ENCODE measurements at regions of chr20 and their contacts with region 1.

Region 1: DNA sequence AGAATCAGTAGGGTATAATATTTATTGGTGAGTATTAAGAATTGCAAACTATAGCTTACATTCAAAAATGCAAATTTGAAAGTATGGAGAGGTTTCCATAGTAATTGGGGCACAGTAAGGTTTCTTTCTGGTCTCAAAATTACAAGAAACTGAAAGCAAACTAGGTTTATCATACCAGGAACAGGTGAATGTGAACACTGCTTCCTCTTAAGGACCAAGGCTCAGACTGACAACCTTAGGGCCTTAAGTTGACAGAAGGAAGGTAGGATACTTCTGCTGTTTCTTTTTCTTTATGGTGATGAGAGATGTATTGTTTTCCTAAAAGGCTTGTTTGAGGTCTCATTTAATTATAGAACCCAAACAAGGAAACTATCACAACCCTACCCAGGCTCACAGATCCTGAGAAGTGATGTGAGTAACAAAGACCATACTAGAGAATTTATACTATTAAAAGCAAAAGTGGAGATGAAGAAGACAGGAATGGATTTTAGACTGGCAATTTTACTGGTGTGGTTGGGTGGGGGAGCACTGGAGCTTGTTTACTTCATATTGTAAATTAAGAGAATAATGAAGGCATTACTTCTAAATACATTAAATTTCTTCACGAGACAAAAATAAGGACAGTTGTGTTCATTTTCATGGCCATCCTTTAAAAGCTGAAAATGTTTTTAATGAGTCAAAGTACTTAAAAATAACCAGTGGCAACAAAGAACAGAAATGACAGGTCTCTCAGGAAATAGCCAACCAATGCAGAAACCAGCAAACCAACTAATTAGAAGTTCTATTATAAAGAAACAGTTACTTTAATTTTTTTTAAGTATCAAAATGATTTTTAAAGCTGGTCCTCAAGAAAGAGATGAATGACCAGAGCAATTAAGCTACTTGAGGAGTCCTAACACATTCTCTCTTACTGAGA is 21.3 kb downstream of the STAU1 start:
- DNase-seq: no peak
- ATAC-seq: peak; percentile 60
- H3K4me3 Mint-ChIP-seq: no peak overlapping the region
- H3K27ac Mint-ChIP-seq: peak overlapping the region; percentile 66
- H3K4me1 Mint-ChIP-seq: peaks cover 42% of the 10 kb centered on the region
- H3K27me3 Mint-ChIP-seq: no peaks in the 10 kb centered on the region
- CTCF ChIP-seq: no peak

Region 2: GRCh38 chr20:49179368-49180277 is 12.8 kb after region 1 on chr20:
- CTCF ChIA-PET with region 1: no interaction called
- POLR2A ChIA-PET with region 1: interaction called, 10 read pairs
- intact Hi-C with region 1: no loop called
- DNase-seq: no peak
- ATAC-seq: peak; percentile 66
- H3K4me3 Mint-ChIP-seq: peak overlapping the region; percentile 42
- H3K27ac Mint-ChIP-seq: peak overlapping the region; percentile 20
- H3K4me1 Mint-ChIP-seq: peaks cover 53% of the 10 kb centered on the region
- H3K27me3 Mint-ChIP-seq: no peaks in the 10 kb centered on the region
- CTCF ChIP-seq: no peak

Region 3: DNA sequence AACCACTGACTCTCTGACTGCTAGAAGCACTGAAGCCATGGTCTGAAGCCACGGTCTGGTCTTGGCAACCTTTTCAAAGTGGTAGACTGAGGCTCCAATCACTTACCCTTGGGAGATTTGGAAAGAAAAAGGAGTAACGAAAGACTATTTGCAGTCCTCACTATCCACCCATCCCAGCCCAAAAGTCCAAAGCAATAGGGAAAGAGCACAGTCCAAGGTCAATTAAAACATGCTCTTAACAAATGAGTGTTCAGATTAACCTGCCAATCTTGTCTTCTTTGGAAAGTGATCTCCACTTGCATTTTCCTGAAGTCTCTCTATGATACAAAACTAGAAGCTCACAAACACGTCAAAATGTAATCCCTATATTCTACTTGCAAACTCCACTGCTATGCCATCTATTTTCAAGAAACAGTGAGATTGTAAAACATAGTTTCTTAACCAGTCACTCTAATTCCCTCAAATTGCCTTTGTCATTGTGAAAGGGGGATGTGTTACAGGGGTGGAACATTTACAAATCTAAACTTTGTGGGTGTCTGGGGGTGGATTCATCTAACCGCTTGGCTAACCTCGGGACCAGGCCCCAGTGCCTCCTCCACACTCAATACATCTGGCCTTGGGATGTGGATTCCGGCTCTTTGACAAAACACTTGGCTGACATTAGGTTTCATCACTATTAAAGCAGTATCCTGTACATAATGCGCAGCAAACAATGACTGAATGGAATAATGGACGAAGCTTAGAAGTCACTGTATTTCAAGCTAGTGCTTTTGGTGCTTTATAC is 490.5 kb after region 1 on chr20:
- CTCF ChIA-PET with region 1: no interaction called
- POLR2A ChIA-PET with region 1: no interaction called
- intact Hi-C with region 1: no loop called
- DNase-seq: no peak
- ATAC-seq: no peak
- H3K4me3 Mint-ChIP-seq: no peak overlapping the region
- H3K27ac Mint-ChIP-seq: no peak overlapping the region
- H3K4me1 Mint-ChIP-seq: peaks cover 28% of the 10 kb centered on the region
- H3K27me3 Mint-ChIP-seq: no peaks in the 10 kb centered on the region
- CTCF ChIP-seq: no peak

Region 4: DNA sequence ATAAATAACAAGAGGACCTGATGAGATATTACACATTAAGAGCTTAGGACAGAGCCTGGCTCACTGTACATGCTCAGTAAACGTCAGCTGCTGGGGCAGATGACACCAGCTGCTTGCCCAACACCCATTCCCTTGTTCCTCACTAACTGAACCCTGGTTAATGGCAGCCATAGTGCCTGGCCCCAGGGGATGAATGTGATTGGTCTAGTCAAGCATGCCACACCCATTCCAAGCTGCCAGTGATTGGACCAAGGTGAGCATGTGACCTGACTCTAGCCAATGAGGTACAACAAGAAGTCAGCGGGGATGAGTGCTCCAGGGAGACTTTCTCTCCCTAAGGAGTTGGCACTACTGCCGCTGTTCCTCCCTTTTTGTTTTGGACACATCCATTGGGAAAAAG is 1258.3 kb after region 1 on chr20:
- CTCF ChIA-PET with region 1: no interaction called
- POLR2A ChIA-PET with region 1: no interaction called
- intact Hi-C with region 1: no loop called
- DNase-seq: no peak
- ATAC-seq: no peak
- H3K4me3 Mint-ChIP-seq: no peak overlapping the region
- H3K27ac Mint-ChIP-seq: no peak overlapping the region
- H3K4me1 Mint-ChIP-seq: no peaks in the 10 kb centered on the region
- H3K27me3 Mint-ChIP-seq: peaks cover 11% of the 10 kb centered on the region
- CTCF ChIP-seq: no peak